ENCODE measurements at regions of chr7 and their contacts with region 1.

Region 1: GRCh38 chr7:93055543-93056107 is 62.2 kb downstream of the SAMD9 start:
- DNase-seq: peak; percentile 34
- ATAC-seq: no peak
- H3K4me3 ChIP-seq: no peak overlapping the region
- H3K27ac ChIP-seq: no peak overlapping the region
- H3K4me1 ChIP-seq: peaks cover 10% of the 10 kb centered on the region; the same call in 1 of the 2 replicates
- H3K27me3 ChIP-seq: peaks cover 0 to 3% of the 10 kb centered on the region in 2 experiments; a peak in 1 of 5 replicates
- CTCF ChIP-seq: peak; percentile 70
- EP300 ChIP-seq: no peak
- POLR2A ChIP-seq: no peak
- RAD21 ChIP-seq: peak; percentile 58

Region 2: DNA sequence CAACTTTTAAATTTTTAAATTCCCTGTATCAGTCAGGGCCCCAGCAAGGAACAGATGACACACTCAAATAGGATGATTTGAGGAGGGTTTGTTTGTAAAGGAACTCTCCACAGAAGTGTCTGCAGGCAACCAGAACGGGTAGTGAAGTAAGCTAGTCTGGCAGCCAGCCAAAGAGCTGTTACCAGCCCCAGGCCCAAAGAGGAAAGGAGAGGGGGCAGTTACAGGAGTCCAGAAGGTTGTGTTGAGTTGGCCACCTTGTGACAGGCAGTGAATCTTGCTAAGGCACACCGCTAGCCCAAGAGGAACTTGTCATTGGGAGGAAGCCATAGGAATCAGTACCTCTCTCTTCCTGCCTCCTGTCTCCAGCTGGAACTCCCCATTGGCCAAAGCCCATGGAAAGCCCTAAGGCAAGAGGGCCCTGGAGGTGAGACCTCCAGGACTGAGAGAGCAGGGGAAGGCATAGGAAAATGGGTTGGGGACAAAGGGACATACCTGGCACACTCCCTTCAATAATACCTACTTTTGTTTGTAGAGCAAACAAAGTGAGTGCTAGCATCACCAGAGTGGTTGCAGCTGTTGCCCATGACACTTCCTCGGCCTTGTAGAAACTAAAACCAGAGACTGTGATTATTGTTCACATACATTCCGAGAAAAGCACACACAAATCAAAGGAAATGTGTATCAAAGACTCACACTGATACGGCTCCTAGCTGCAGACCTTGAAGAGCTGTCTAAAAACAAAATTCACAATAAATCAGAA is 633.8 kb before region 1 on chr7:
- CTCF ChIA-PET with region 1: no interaction called
- POLR2A ChIA-PET with region 1: no interaction called
- in situ Hi-C with region 1: loop called (anchors 25 kb)
- intact Hi-C with region 1: loop called (anchors 2 kb)
- DNase-seq: no peak
- ATAC-seq: no peak
- H3K4me3 ChIP-seq: no peak overlapping the region
- H3K27ac ChIP-seq: no peak overlapping the region
- H3K4me1 ChIP-seq: peaks cover 21% of the 10 kb centered on the region
- H3K27me3 ChIP-seq: no peaks in the 10 kb centered on the region
- CTCF ChIP-seq: no peak
- EP300 ChIP-seq: no peak
- POLR2A ChIP-seq: no peak
- RAD21 ChIP-seq: no peak

Region 3: GRCh38 chr7:92461027-92462003 is 594.3 kb before region 1 on chr7:
- CTCF ChIA-PET with region 1: no interaction called
- POLR2A ChIA-PET with region 1: no interaction called
- in situ Hi-C with region 1: no loop called
- intact Hi-C with region 1: loop called (anchors 10 kb)
- DNase-seq: peak; percentile 29
- ATAC-seq: peak; percentile 90
- H3K4me3 ChIP-seq: no peak overlapping the region
- H3K27ac ChIP-seq: no peak overlapping the region
- H3K4me1 ChIP-seq: no peaks in the 10 kb centered on the region
- H3K27me3 ChIP-seq: no peaks in the 10 kb centered on the region
- CTCF ChIP-seq: peak; percentile 66
- EP300 ChIP-seq: no peak
- POLR2A ChIP-seq: no peak
- RAD21 ChIP-seq: 0 out of 2 replicates have a peak, but pooled peaks have one; percentile 15

Region 4: GRCh38 chr7:92621026-92621540 is 434.5 kb before region 1 on chr7:
- CTCF ChIA-PET with region 1: interaction called, 8 read pairs
- POLR2A ChIA-PET with region 1: no interaction called
- in situ Hi-C with region 1: loop called (anchors 10 kb)
- intact Hi-C with region 1: loop called (anchors 2 kb)
- DNase-seq: peak; percentile 41
- ATAC-seq: peak; percentile 85
- H3K4me3 ChIP-seq: no peak overlapping the region
- H3K27ac ChIP-seq: peak overlapping the region; percentile 4
- H3K4me1 ChIP-seq: no peaks in the 10 kb centered on the region
- H3K27me3 ChIP-seq: no peaks in the 10 kb centered on the region
- CTCF ChIP-seq: peak; percentile 66
- EP300 ChIP-seq: no peak
- POLR2A ChIP-seq: no peak
- RAD21 ChIP-seq: peak; percentile 53

Region 5: DNA sequence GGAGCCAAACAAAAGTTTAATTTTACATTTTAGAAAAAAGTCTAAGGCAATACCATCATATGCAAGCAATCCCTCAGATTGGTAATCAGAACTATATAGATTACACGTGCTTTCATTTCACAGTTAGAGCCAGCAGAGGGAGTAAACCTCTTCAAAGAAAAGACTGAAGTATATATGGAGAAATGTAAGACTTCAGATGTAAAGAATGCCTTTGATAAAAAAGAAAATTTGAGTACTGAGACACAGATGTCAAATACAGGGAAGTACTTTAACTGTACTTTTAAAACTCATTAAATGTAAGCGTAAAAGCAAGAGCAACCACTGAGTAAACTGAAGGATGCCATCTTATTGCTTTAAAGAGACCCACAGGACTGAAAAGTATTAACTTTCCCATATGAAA is 364.0 kb before region 1 on chr7:
- CTCF ChIA-PET with region 1: no interaction called
- POLR2A ChIA-PET with region 1: no interaction called
- in situ Hi-C with region 1: no loop called
- intact Hi-C with region 1: loop called (anchors 10 kb)
- DNase-seq: peak; percentile 68
- ATAC-seq: no peak
- H3K4me3 ChIP-seq: no peak overlapping the region
- H3K27ac ChIP-seq: peak overlapping the region; percentile 23
- H3K4me1 ChIP-seq: peaks cover 55% of the 10 kb centered on the region
- H3K27me3 ChIP-seq: no peaks in the 10 kb centered on the region
- CTCF ChIP-seq: peak; percentile 50; the same call in 1 of the 2 replicates
- EP300 ChIP-seq: no peak
- POLR2A ChIP-seq: no peak
- RAD21 ChIP-seq: peak; percentile 43; the same call in 1 of the 2 replicates